A673 (cell line): ENCODE measurements at regions of chr4 and their contacts with region 1.

Region 1: DNA sequence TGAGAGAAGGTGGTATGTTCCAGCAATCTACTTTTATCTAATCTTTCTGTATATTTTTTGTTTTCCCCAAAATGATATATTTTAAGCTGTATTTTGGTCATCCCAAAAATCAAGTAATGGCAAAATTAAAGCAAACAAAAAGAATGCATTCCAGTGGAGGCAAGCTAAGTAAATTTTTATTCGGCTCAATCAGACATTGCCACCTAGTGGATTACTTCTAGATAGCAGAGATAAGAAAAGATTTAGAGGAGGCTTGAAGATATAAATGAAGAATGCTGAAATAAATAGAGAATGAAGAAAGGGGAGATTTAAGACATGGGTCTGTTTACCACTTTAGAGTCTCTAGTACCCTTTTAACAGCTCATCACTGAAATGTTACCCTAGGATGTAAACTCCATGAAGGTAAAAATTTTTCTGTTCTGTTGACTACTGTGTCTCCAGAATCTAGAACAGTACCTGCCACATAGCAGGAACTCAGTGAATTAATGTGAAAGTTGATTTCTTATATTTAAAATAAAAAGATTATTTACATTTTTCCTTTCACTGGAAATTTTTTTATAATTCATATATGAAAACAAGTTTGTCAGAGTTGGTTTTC is 110.9 kb upstream of the ANK2 start:
- DNase-seq: peak; percentile 75
- H3K4me3 ChIP-seq: no peak overlapping the region
- H3K27ac ChIP-seq: no peak overlapping the region
- H3K4me1 ChIP-seq: peaks cover 12% of the 10 kb centered on the region
- H3K27me3 ChIP-seq: no peaks in the 10 kb centered on the region
- CTCF ChIP-seq: peak; percentile 84

Region 2: GRCh38 chr4:112636688-112637551 is 301.6 kb before region 1 on chr4 and contains the starts of genes LARP7 and ZGRF1:
- CTCF ChIA-PET with region 1: no interaction called
- POLR2A ChIA-PET with region 1: no interaction called
- intact Hi-C with region 1: loop called (anchors 5 kb)
- DNase-seq: peak; percentile 99
- H3K4me3 ChIP-seq: peak within 1 kb of the TSS; percentile 71
- H3K27ac ChIP-seq: peak within 1 kb of the TSS; percentile 93
- H3K4me1 ChIP-seq: peaks cover 9% of the 10 kb centered on the region
- H3K27me3 ChIP-seq: no peaks in the 10 kb centered on the region
- CTCF ChIP-seq: peak; percentile 95
- total RNA-seq, gene LARP7: 40.6 and 40.8 TPM in 2 replicates
- total RNA-seq, gene ZGRF1: 31.4 and 37.5 TPM in 2 replicates

Region 3: GRCh38 chr4:112853662-112854256 is 84.8 kb before region 1 on chr4:
- CTCF ChIA-PET with region 1: no interaction called
- POLR2A ChIA-PET with region 1: no interaction called
- intact Hi-C with region 1: loop called (anchors 1 kb)
- DNase-seq: peak; percentile 23
- H3K4me3 ChIP-seq: no peak overlapping the region
- H3K27ac ChIP-seq: no peak overlapping the region
- H3K4me1 ChIP-seq: peaks cover 8% of the 10 kb centered on the region
- H3K27me3 ChIP-seq: no peaks in the 10 kb centered on the region
- CTCF ChIP-seq: peak; percentile 78

Region 4: DNA sequence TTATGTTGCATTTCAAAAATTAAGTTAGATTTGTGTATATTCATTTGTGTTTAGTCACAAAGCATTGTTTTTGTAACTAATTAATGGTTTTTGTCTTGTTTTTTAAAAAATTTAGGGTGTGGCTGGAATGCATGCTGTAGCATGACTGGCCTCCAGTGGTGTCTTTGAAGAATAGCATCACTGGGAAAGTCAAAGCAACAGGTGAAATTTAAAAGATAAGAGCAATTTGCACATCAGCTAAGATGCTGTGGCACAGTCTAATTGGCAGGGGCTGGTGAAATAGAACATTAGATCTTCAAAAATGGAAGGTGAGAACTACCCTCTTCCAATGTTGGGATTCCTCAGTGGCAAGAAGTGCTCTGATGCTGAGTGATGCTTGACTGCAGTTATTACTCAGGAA is 156.2 kb after region 1 on chr4:
- CTCF ChIA-PET with region 1: no interaction called
- POLR2A ChIA-PET with region 1: no interaction called
- intact Hi-C with region 1: loop called (anchors 2 kb)
- DNase-seq: peak; percentile 27
- H3K4me3 ChIP-seq: no peak overlapping the region
- H3K27ac ChIP-seq: no peak overlapping the region
- H3K4me1 ChIP-seq: no peaks in the 10 kb centered on the region
- H3K27me3 ChIP-seq: no peaks in the 10 kb centered on the region
- CTCF ChIP-seq: peak; percentile 81

Region 5: GRCh38 chr4:113289766-113290165 is 351.2 kb after region 1 on chr4:
- CTCF ChIA-PET with region 1: no interaction called
- POLR2A ChIA-PET with region 1: no interaction called
- intact Hi-C with region 1: no loop called
- DNase-seq: no peak
- H3K4me3 ChIP-seq: no peak overlapping the region
- H3K27ac ChIP-seq: no peak overlapping the region
- H3K4me1 ChIP-seq: peaks cover 8% of the 10 kb centered on the region
- H3K27me3 ChIP-seq: no peaks in the 10 kb centered on the region
- CTCF ChIP-seq: no peak